Activated naive CD4-positive, alpha-beta T cell treated with anti-CD3 and anti-CD28 coated beads for 36 hours (primary cell): ENCODE measurements at regions of chr14 and their contacts with region 1.

Region 1: DNA sequence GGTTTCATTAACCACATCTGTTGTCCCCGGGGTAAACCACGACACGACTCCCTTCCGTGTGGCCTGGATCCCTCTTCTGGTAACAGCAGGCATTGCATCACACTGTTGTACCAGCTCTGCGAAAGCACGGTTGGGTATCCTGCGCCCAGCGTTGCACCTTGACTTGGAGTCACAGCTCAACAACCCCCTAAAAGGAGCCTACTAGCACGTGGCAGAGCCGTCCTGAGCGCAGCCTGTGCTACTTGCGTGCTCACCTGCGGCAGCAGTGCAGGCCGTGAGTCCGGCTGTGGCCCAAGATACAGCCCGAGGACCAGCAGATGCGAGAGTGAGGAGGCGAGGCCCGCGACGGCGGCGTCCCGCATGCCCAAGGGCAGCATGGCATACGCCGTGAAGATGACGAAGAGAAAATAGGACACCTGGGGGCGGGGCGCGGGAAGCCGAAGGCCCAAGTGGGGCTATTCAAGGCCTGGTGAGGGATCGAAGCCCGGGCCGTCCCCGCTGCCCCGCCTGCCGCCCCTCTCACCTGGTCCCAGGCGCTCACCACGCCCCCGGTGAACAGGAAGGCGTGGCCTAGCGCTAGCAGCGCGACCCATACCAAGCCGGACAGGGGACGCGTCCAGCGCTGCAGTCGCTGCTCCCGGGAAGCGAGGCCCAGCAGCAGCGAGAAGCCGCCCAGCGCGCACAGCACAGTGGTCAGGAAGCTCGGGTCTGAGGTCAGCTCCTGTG is 2.4 kb downstream of the ADCY4 start:
- DNase-seq: peak; percentile 91
- H3K4me3 Mint-ChIP-seq: peak overlapping the region; percentile 71
- H3K27ac Mint-ChIP-seq: no peak overlapping the region
- H3K4me1 Mint-ChIP-seq: peaks cover 28% of the 10 kb centered on the region
- H3K27me3 Mint-ChIP-seq: peaks cover 24% of the 10 kb centered on the region

Region 2: GRCh38 chr14:24310646-24311604 is 21.5 kb before region 1 on chr14 and contains the start of gene LTB4R:
- CTCF ChIA-PET with region 1: interaction called, 111 read pairs
- intact Hi-C with region 1: loop called (anchors 1 kb)
- DNase-seq: peak; percentile 71
- H3K4me3 Mint-ChIP-seq: peak within 1 kb of the TSS; percentile 71
- H3K27ac Mint-ChIP-seq: peak within 1 kb of the TSS; percentile 68
- H3K4me1 Mint-ChIP-seq: peaks cover 64% of the 10 kb centered on the region
- H3K27me3 Mint-ChIP-seq: no peaks in the 10 kb centered on the region
- total RNA-seq, gene LTB4R: 10.6 to 11.4 TPM

Region 3: DNA sequence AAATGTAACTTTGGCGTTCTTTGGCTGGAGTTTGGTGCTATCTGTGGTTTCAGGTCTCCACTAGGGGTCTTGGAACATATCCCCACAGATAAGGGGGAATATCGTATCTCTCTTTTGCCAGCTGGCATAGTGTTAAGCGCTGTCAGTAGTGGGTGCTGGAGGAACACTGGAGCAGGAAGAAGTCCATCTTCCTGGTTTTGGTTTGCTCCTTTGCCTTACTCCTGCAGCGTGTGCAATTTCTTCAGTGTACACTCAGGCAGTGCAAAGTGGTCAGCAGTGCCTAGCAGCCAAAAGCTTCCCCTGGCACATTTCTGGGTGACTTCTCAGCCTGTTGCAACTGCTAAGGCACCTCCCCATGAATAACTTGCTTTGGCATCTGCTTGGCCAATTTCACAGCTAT is 19.1 kb after region 1 on chr14:
- CTCF ChIA-PET with region 1: interaction called, 34 read pairs
- intact Hi-C with region 1: no loop called
- DNase-seq: no peak
- H3K4me3 Mint-ChIP-seq: no peak overlapping the region
- H3K27ac Mint-ChIP-seq: no peak overlapping the region
- H3K4me1 Mint-ChIP-seq: peaks cover 8% of the 10 kb centered on the region
- H3K27me3 Mint-ChIP-seq: peaks cover 31% of the 10 kb centered on the region

Region 4: DNA sequence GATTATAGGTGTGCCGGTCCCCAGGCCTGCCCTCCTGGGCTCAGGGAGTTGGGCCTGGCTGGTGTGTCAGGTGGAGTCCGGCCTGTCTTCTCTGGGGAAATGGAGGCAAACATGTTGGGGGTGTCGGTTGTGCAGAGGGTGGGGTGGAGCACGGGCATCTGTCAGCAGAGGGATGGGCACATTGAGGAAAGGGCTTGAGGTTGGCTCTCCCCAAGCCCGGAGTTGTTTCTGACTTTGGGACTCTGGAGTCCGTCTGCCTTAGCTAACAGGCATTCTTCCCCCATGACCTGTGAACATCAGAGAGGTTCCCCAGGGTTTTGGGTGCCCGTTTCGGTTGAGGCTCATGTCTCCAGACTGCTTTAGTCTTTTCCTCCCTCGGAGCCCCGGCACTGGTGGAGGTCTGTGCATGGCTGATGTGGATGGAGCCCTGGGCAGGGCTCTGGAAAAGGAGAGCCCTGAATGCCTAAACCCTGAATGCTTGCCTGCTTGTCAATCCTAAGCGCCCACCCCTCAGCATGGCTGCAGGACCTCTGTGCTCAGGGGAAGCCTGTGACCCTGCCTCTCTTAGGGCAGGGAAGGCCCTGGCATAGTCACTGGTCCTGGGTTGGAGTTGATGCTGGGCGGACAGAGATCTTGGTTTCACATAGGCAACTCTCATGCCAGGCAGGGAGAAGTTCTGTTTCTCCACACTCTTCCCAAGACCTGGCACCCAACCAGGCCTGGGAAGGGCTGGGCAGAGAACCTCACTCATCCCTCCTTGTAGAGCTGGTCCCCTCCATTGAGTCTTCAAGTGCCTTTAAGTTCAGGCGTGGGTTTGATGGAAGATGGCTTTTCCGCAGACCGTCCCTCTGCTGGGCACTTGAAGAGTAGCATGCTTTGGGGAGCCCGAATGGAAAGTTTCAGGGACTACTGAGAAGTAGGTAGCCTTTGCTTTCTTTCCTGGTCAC is 79.3 kb after region 1 on chr14:
- CTCF ChIA-PET with region 1: interaction called, 10 read pairs
- intact Hi-C with region 1: no loop called
- DNase-seq: peak; percentile 40
- H3K4me3 Mint-ChIP-seq: no peak overlapping the region
- H3K27ac Mint-ChIP-seq: no peak overlapping the region
- H3K4me1 Mint-ChIP-seq: no peaks in the 10 kb centered on the region
- H3K27me3 Mint-ChIP-seq: no peaks in the 10 kb centered on the region

Region 5: GRCh38 chr14:25150934-25151790 is 818.7 kb after region 1 on chr14:
- CTCF ChIA-PET with region 1: no interaction called
- intact Hi-C with region 1: loop called (anchors 10 kb)
- DNase-seq: no peak
- H3K4me3 Mint-ChIP-seq: no peak overlapping the region
- H3K27ac Mint-ChIP-seq: no peak overlapping the region
- H3K4me1 Mint-ChIP-seq: no peaks in the 10 kb centered on the region
- H3K27me3 Mint-ChIP-seq: peaks cover 8% of the 10 kb centered on the region